ENCODE measurements at regions of chr16 and their contacts with region 1.

Region 1: DNA sequence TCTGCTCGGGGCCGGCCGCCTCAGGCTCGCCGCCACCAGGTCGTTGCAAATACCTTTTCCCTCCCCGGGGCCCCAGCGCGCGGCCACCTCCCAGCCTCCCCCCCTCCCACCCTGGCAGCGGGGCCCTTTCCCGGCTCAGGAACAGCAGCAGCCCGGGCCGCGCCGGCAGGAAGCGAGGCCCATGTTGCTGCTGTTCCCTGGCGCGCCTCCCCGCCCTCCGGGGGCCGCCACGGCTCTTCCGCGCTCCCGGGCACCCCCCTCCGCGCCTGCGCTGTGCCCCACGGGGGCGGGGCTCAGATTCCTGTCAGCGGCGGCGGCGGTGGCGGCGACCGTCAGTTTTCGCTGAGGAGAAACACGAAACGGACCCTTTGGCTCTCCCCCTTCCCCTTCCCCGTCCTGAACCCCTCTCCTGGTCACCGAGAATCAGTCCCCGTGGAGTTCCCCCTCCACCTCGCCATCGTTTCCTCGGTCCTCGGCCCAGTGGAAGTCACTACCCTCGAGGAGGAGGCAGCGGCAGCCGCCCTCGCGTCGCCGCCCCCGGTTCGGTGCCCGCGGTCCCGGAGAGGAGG is at the start of gene NFAT5:
- DNase-seq: peak; percentile 92
- ATAC-seq: peak; percentile 93
- total RNA-seq, gene NFAT5: 13.9 TPM

Region 2: GRCh38 chr16:69396187-69397061 is 169.3 kb before region 1 on chr16:
- intact Hi-C with region 1: loop called (anchors 10 kb)
- DNase-seq: no peak
- ATAC-seq: peak; percentile 74

Region 3: DNA sequence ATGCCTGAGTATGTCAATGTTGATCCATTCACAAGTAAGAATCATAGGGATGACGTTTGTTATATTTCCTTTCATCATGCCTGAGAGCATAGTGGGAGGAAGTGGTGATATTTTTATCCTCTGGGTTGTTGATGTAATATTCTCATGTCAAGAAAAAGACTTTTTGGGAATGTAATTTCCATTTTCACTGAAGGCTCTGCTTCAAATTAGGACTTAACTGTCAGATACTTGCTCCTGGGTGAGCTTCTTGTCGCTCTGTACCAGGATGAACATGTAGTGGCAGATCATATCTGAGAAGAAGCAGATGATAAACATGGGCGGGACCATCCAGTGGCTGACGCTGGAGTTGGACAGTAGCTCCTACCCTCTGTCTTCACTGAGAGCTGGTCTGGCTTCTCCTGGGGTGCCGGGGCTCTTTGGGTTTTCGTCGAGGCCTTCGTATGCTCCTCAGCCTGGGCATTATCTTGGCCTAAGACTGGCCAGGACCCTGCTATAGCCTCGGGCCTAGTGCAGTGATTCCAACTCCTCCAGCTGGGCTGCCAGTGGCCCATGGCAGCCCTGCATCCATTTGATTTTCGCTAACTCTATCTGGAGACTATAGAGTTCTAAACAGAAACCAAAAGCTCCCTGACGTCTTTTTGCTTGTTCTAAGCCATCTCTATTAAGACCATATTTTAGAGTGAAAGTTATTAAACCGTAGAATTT is 121.7 kb before region 1 on chr16:
- intact Hi-C with region 1: loop called (anchors 10 kb)
- DNase-seq: peak; percentile 53
- ATAC-seq: peak; percentile 68

Region 4: DNA sequence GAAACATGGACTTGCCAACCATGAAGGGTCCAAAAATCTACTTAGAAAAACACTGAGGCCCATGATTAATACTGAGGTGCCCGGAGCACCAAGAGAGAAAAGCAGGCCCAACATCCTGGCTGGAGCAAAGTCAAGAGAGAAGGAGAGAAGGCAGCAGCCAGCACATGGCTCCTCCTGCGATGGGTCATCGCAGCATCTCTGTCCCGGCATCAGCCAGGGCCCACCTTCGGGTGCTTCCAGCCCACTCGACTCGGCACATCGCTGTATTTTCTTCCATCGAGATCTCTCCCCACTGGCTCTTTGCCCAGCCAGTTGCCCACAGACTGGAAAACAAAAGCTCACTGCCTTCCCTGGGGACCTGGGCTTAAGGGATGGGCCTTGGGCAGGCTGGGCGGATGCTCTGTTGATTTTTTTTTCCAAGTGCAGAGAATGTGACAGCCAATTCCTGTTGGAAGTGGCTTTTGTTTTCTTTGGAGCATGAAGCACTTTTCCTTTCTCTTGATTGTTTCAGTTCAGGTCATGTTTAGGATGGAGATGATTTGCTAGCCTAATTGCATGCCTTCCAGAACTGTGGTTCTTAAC is 83.3 kb before region 1 on chr16:
- intact Hi-C with region 1: loop called (anchors 10 kb)
- DNase-seq: peak; percentile 82
- ATAC-seq: peak; percentile 85

Measured in Right ventricle myocardium superior (tissue), 1 donor.